ENCODE measurements at regions of chr9 and their contacts with region 1.

Region 1: GRCh38 chr9:126722252-126723078 is 82.4 kb upstream of the ZBTB43 start:
- DNase-seq: peak; percentile 79 to 93 (median 85)
- ATAC-seq: peak; percentile 46 to 48
- H3K4me3 Mint-ChIP-seq: peak overlapping the region; percentile 87 to 96 (median 90)
- H3K27ac Mint-ChIP-seq: peak overlapping the region; percentile 94 to 100 (median 99)
- H3K4me1 Mint-ChIP-seq: peaks cover 33 to 57% (median 52%) of the 10 kb centered on the region in 4 donors
- H3K27me3 Mint-ChIP-seq: no peaks in the 10 kb centered on the region

Region 2: GRCh38 chr9:126704873-126705766 is 17.3 kb before region 1 on chr9:
- POLR2A ChIA-PET with region 1: interaction called, 25 read pairs
- DNase-seq: peak; percentile 71 to 91 (median 84)
- ATAC-seq: peak; percentile 74 to 86
- H3K4me3 Mint-ChIP-seq: peak overlapping the region; percentile 25 to 89 (median 63)
- H3K27ac Mint-ChIP-seq: peak overlapping the region in 6 of 10 donors; percentile 4 to 91 (median 44)
- H3K4me1 Mint-ChIP-seq: peaks cover 12 to 22% (median 21%) of the 10 kb centered on the region in 4 donors
- H3K27me3 Mint-ChIP-seq: peaks cover 7 to 38% (median 26%) of the 10 kb centered on the region in 5 donors

Region 3: GRCh38 chr9:126733005-126733404 is 10.5 kb after region 1 on chr9:
- POLR2A ChIA-PET with region 1: interaction called, 13 read pairs
- DNase-seq: no peak
- ATAC-seq: no peak
- H3K4me3 Mint-ChIP-seq: no peak overlapping the region
- H3K27ac Mint-ChIP-seq: peak overlapping the region in 1 of 10 donors; percentile 3
- H3K4me1 Mint-ChIP-seq: no peaks in the 10 kb centered on the region
- H3K27me3 Mint-ChIP-seq: peaks cover 0 to 4% (median 0%) of the 10 kb centered on the region in 5 donors

Region 4: GRCh38 chr9:126743041-126743440 is 20.6 kb after region 1 on chr9:
- POLR2A ChIA-PET with region 1: no interaction called
- DNase-seq: no peak
- ATAC-seq: no peak
- H3K4me3 Mint-ChIP-seq: no peak overlapping the region
- H3K27ac Mint-ChIP-seq: peak overlapping the region in 1 of 10 donors; percentile 14
- H3K4me1 Mint-ChIP-seq: peaks cover 9 to 22% (median 19%) of the 10 kb centered on the region in 4 donors
- H3K27me3 Mint-ChIP-seq: no peaks in the 10 kb centered on the region